CD4-positive, alpha-beta T cell (primary cell): ENCODE measurements at regions of chr13 and their contacts with region 1.

Region 1: GRCh38 chr13:99380921-99381645 is 73.9 kb upstream of the GPR183 start:
- DNase-seq: peak in 13 of 14 experiments; percentile 42 to 77 (median 57)
- ATAC-seq: peak; percentile 40
- H3K4me3 ChIP-seq: no peak overlapping the region
- H3K4me3 Mint-ChIP-seq: peak overlapping the region; percentile 65
- H3K27ac ChIP-seq: peak overlapping the region; percentile 65 to 87
- H3K27ac Mint-ChIP-seq: peak overlapping the region; percentile 88
- H3K4me1 ChIP-seq: peaks cover 89% of the 10 kb centered on the region
- H3K4me1 Mint-ChIP-seq: peaks cover 95% of the 10 kb centered on the region
- H3K27me3 ChIP-seq: no peaks in the 10 kb centered on the region
- H3K27me3 Mint-ChIP-seq: no peaks in the 10 kb centered on the region
- CTCF ChIP-seq: no peak

Region 2: GRCh38 chr13:99301913-99302636 is 79.0 kb before region 1 on chr13:
- CTCF ChIA-PET with region 1: interaction called, 3 read pairs
- POLR2A ChIA-PET with region 1: interaction called, 63 read pairs
- intact Hi-C with region 1: loop called in 1 of 2 experiments (anchors 2 kb)
- DNase-seq: no peak
- ATAC-seq: no peak
- H3K4me3 ChIP-seq: peak overlapping the region; percentile 83
- H3K4me3 Mint-ChIP-seq: peak overlapping the region; percentile 97
- H3K27ac ChIP-seq: peak overlapping the region; percentile 68 to 74
- H3K27ac Mint-ChIP-seq: peak overlapping the region; percentile 89
- H3K4me1 ChIP-seq: peaks cover 42% of the 10 kb centered on the region
- H3K4me1 Mint-ChIP-seq: peaks cover 72% of the 10 kb centered on the region
- H3K27me3 ChIP-seq: no peaks in the 10 kb centered on the region
- H3K27me3 Mint-ChIP-seq: no peaks in the 10 kb centered on the region
- CTCF ChIP-seq: no peak

Region 3: GRCh38 chr13:99322297-99323103 is 58.6 kb before region 1 on chr13:
- CTCF ChIA-PET with region 1: interaction called, 3 read pairs
- POLR2A ChIA-PET with region 1: interaction called, 18 read pairs
- intact Hi-C with region 1: no loop called
- DNase-seq: peak in 7 of 14 experiments; percentile 16 to 84 (median 57)
- ATAC-seq: peak; percentile 72
- H3K4me3 ChIP-seq: peak overlapping the region; percentile 19
- H3K4me3 Mint-ChIP-seq: peak overlapping the region; percentile 59
- H3K27ac ChIP-seq: peak overlapping the region; percentile 69 to 80
- H3K27ac Mint-ChIP-seq: peak overlapping the region; percentile 93
- H3K4me1 ChIP-seq: peaks cover 58% of the 10 kb centered on the region
- H3K4me1 Mint-ChIP-seq: peaks cover 83% of the 10 kb centered on the region
- H3K27me3 ChIP-seq: no peaks in the 10 kb centered on the region
- H3K27me3 Mint-ChIP-seq: no peaks in the 10 kb centered on the region
- CTCF ChIP-seq: no peak

Region 4: DNA sequence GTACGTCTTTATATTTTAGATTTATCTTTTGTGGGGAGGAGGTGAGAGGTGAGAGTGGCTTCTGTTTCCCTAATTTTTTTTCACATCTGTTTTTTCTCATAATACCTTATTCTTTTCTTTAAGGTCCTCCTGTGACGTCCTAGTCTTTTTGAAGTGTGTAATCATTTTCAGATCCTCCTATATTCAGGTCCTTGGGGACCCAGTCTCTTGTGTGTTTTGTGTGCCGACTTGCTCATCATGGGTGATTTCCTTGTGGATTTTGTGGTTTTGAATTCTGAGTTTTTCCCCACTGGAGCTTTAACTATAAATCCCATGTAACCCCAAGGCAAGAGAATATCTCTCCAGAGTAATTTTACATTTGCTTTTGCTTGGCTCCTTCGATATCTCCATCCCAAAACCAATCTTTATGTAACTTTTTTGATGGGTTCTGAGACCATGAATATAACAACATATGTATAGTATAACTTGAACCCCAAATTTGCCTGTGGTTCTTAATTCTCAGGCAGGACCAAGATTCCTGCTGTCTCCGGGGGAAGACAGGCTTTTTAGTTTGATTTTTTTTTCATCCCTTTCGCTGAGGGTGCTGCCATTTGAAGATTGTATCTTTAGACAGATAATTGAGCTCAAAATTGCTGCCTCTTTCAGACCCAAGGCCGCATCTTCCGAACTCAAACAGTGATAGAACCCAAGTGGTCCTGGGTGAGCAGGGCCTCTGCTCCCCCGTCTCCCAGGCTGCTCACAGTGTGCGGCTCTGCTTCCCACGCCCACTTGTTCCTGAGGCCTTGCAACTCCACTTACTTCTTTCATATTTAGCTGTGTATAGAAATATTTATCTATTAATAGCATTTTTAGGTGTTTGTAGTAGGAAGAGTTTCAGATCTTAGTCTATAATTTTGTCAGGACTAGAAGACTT is 14.8 kb before region 1 on chr13:
- CTCF ChIA-PET with region 1: interaction called, 3 read pairs
- POLR2A ChIA-PET with region 1: interaction called, 64 read pairs
- intact Hi-C with region 1: no loop called
- DNase-seq: peak in 2 of 14 experiments; percentile 31 to 58
- ATAC-seq: no peak
- H3K4me3 ChIP-seq: no peak overlapping the region
- H3K4me3 Mint-ChIP-seq: peak overlapping the region; percentile 79
- H3K27ac ChIP-seq: peak overlapping the region; percentile 25 to 65
- H3K27ac Mint-ChIP-seq: peak overlapping the region; percentile 97
- H3K4me1 ChIP-seq: peaks cover 54% of the 10 kb centered on the region
- H3K4me1 Mint-ChIP-seq: peaks cover 94% of the 10 kb centered on the region
- H3K27me3 ChIP-seq: no peaks in the 10 kb centered on the region
- H3K27me3 Mint-ChIP-seq: no peaks in the 10 kb centered on the region
- CTCF ChIP-seq: no peak